Activated naive CD4-positive, alpha-beta T cell treated with anti-CD3 and anti-CD28 coated beads for 36 hours (primary cell): ENCODE measurements at regions of chr1 and their contacts with region 1.

Region 1: DNA sequence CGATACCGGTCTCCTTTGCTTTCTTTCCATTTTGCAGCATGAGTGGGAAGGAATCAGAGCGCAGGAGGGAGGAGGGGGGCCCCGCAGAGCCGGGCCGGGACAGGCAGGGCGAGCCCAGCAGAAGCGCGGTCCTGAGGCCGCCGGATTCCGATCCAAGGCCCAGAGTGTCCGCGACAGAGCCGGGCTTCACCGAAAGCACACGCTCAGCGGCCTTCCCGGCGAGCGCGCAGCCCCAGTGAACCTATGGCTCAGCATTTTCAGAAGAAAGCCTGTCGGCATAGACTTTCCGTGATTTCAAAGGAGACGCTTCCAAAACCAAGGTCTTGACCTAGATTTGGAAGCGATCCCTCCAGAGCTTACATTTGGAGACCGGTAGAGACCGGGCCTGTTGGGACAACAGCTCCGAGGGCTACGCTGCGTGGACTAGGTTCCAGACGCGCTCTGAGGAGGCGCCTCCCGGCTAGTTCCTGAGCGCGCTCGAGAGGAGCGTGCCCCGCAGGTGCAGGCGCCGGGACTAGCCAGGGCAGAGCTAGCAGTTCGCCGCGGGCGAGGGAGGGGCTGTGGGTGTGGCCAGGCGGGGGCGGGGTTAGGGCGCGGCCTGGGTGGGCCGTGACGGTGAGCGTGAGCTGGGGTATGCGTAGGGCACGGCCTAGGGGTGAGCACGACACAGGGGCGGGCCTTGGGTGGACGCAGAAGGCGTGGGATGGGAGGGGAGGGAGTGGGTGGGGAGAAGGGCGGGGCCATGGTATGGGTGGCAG is 27.8 kb upstream of the PRSS38 start:
- DNase-seq: peak; percentile 95
- H3K4me3 Mint-ChIP-seq: peak overlapping the region; percentile 73
- H3K27ac Mint-ChIP-seq: no peak overlapping the region
- H3K4me1 Mint-ChIP-seq: peaks cover 19% of the 10 kb centered on the region
- H3K27me3 Mint-ChIP-seq: peaks cover 2% of the 10 kb centered on the region

Region 2: DNA sequence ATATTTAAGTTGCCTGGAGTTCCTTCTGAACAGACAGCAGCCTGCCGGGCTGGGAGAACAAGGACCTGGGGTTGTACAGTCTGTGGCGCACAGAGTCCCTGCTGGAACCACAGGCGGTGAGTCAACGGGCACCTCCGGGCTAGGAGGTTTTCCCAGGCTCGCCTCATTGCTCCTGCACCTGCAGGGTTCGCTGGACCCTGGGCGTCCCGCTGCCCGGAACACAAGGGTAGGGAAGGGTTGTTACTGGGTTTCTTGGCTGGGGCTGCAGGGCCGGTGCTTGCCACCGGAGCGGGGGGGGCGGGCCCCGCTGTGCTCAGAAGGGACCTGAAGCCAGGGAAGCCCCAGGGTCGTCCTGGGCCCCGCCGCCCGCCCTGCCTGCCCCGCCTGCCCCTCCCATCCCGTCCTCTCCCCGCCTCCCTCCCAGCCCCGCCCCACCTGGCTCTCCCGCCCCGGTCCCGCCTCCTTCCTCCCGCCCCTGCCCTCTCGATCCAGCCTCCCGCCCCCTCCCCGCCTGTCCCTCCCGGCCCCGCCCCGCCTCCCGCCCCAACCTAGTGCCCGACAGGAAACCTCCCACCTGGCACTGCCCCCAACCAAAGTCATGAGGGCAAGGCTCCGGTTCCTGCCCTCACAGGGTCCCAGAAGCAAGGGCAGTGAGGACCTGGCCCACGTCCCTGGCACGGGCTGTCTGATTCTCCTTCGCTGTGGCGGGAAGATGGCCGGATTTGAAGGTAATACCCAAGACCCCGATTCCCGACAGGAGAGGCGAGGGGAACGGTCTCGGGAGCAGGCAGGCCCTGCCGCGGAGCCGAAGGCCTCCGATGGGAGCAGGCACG is 59.4 kb before region 1 on chr1:
- CTCF ChIA-PET with region 1: no interaction called
- intact Hi-C with region 1: loop called (anchors 1 kb)
- DNase-seq: peak; percentile 82
- H3K4me3 Mint-ChIP-seq: peak overlapping the region; percentile 82
- H3K27ac Mint-ChIP-seq: peak overlapping the region; percentile 65
- H3K4me1 Mint-ChIP-seq: peaks cover 22% of the 10 kb centered on the region
- H3K27me3 Mint-ChIP-seq: peaks cover 4% of the 10 kb centered on the region

Region 3: GRCh38 chr1:227734856-227735538 is 52.7 kb before region 1 on chr1 and contains the starts of genes JMJD4 and SNAP47:
- CTCF ChIA-PET with region 1: no interaction called
- intact Hi-C with region 1: loop called (anchors 1 kb)
- DNase-seq: peak; percentile 93
- H3K4me3 Mint-ChIP-seq: peak within 1 kb of the TSS; percentile 92
- H3K27ac Mint-ChIP-seq: peak within 1 kb of the TSS; percentile 76
- H3K4me1 Mint-ChIP-seq: peaks cover 40% of the 10 kb centered on the region
- H3K27me3 Mint-ChIP-seq: no peaks in the 10 kb centered on the region
- total RNA-seq, gene JMJD4: 11.3 to 11.7 TPM
- total RNA-seq, gene SNAP47: 18.7 to 23.0 TPM

Region 4: GRCh38 chr1:227886993-227887696 is 99.5 kb after region 1 on chr1:
- CTCF ChIA-PET with region 1: no interaction called
- intact Hi-C with region 1: loop called (anchors 5 kb)
- DNase-seq: peak; percentile 43
- H3K4me3 Mint-ChIP-seq: peak overlapping the region; percentile 32
- H3K27ac Mint-ChIP-seq: peak overlapping the region; percentile 41
- H3K4me1 Mint-ChIP-seq: peaks cover 30% of the 10 kb centered on the region
- H3K27me3 Mint-ChIP-seq: no peaks in the 10 kb centered on the region

Region 5: GRCh38 chr1:228082135-228082891 is 294.6 kb after region 1 on chr1 and contains the start of gene ARF1:
- CTCF ChIA-PET with region 1: no interaction called
- intact Hi-C with region 1: loop called (anchors 2 kb)
- DNase-seq: peak; percentile 89
- H3K4me3 Mint-ChIP-seq: peak within 1 kb of the TSS; percentile 93
- H3K27ac Mint-ChIP-seq: peak within 1 kb of the TSS; percentile 96
- H3K4me1 Mint-ChIP-seq: peaks cover 50% of the 10 kb centered on the region
- H3K27me3 Mint-ChIP-seq: no peaks in the 10 kb centered on the region
- total RNA-seq, gene ARF1: 346 to 358 TPM

Region 6: DNA sequence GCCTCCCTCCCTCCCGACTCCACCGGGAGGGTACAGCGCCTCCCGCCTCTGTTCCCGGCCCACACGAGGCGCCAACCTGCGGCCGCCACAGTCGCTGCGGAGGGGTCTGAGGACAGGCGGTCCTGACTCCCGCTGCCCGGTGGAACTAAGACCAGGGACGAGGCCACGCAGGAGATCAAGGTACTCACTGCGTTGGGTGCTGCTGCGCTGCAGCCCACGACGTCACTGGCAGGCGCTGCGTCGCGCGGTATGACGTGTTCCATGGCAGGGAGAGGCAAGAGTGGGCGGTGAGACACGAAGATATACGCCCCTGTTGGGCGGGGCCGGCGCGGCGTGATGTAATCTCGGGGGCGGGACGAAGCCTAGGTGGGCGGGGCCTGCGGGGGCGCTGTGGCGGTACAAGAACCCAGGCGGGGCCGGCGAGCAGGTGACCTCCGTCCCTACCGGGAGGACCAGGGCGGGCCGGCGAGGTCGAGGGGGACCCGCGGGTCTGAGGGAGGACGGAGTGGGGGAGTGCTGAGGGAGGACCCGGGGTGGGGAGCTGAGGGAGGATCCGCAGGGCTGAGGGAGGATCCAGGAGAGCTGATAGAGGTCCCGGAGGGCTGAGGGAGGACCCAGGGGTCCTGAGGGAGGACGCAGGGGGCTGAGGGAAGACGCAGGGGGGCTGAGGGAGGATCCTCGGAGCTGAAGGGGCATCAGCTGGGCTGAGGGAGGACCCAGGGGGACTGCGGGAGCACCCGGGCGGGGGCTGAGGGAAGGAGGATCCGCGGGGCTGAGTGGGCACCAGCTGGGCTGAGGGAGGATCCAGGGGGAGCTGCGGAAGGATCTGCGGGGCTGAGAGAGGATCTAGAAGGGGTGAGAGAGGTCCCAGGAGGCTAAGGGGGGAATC is 321.6 kb after region 1 on chr1 and contains the start of gene MRPL55:
- CTCF ChIA-PET with region 1: no interaction called
- intact Hi-C with region 1: loop called (anchors 2 kb)
- DNase-seq: peak; percentile 98
- H3K4me3 Mint-ChIP-seq: peak within 1 kb of the TSS; percentile 91
- H3K27ac Mint-ChIP-seq: peak within 1 kb of the TSS; percentile 85
- H3K4me1 Mint-ChIP-seq: peaks cover 27% of the 10 kb centered on the region
- H3K27me3 Mint-ChIP-seq: no peaks in the 10 kb centered on the region
- total RNA-seq, gene MRPL55: 45.5 TPM